Mammary epithelial cell (primary cell): ENCODE measurements at regions of chr10 and their contacts with region 1.

Region 1: DNA sequence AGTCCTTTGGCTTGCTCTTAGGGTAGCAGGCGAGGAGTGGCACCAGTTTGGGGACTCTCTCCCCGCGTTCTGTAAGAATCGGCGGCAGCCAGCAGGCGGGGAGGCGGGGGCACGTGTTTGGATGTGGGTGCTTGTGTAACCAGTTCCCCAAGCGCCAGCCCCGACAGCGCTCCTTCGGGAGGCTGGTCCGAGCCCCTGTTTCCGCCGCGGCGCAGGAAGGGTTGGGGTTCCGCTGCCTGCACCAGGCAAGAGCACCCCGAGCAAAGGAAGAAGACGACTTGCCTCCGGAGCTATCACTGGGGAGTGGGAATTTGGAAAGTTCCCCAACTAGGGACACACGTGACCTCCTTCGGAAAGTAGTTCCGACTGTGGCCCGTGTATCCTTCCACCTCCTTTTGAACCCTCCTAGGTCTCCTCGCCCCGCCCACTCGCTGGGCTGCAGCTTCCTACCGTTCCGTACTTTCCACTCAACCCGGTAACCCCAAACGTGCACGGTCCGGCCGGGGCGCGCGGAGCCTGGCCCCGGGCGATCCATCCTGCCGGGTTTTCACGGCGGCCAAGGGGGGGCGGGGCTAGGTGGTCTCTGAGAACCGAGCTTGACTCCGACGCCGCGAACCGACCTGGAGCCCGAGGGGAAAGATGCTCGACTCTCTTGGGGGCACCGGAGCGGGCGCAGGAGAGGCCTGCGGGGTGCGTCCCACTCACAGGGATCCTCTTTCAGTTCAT is 1.2 kb downstream of the KLLN start:
- DNase-seq: peak; percentile 96
- H3K4me3 ChIP-seq: peak overlapping the region; percentile 51 to 77 (median 68)
- H3K27ac ChIP-seq: peak overlapping the region; percentile 69
- H3K4me1 ChIP-seq: peaks cover 12% of the 10 kb centered on the region
- H3K27me3 ChIP-seq: no peaks in the 10 kb centered on the region
- CTCF ChIP-seq: no peak

Region 2: DNA sequence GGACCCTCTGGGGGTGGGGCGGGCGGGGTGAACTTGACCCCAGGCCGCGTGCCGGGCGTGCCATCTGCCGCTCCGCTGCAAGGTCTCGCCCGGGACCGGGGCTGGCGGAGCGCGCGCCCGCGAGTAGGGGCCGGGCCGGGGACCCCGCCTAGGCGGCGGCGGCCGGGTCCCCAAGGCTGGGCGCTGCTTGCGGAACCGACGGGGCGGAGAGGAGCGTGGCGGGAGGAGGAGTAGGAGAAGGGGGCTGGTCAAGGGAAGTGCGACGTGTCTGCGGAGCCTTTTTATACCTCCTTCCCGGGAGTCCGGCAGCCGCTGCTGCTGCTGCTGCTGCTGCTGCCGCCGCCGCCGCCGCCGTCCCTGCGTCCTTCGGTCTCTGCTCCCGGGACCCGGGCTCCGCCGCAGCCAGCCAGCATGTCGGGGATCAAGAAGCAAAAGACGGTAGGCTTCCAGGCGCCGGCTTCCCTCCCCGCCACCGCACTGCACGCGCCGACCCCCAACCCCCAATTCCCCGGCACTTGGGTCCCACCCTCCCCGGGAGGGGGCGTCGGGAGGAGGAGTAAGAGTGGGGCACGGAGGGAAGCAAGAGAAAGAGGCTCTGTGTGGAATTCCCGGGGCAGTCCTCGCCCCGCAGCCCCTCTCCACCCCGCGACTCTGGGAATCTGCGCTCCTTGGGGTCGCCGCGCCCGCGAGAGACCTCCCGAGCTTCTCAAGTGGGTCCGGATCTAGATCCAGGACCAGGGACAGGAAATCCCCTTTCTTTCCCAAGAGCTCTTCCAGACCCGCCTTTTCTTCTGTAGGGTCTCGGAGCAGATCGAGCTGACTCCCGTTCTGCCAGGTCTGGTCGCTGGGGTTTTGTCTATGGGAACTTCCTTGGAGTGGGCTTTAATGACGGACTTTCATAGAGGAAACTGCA is 202.3 kb before region 1 on chr10 and contains the start of gene PAPSS2:
- CTCF ChIA-PET with region 1: no interaction called
- dilution Hi-C with region 1: no loop called
- in situ Hi-C with region 1: no loop called
- intact Hi-C with region 1: loop called (anchors 5 kb)
- DNase-seq: peak; percentile 46
- H3K4me3 ChIP-seq: peak within 1 kb of the TSS; percentile 35 to 79 (median 68)
- H3K27ac ChIP-seq: no peak within 1 kb of the TSS
- H3K4me1 ChIP-seq: peaks cover 3% of the 10 kb centered on the region
- H3K27me3 ChIP-seq: no peaks in the 10 kb centered on the region
- CTCF ChIP-seq: no peak
- total RNA-seq, gene PAPSS2: 3.8 to 9.1 TPM

Region 3: GRCh38 chr10:87931836-87932230 is 69.7 kb after region 1 on chr10:
- CTCF ChIA-PET with region 1: no interaction called
- dilution Hi-C with region 1: no loop called
- in situ Hi-C with region 1: no loop called
- intact Hi-C with region 1: loop called (anchors 5 kb)
- DNase-seq: peak; percentile 66
- H3K4me3 ChIP-seq: no peak overlapping the region
- H3K27ac ChIP-seq: peak overlapping the region; percentile 45
- H3K4me1 ChIP-seq: peaks cover 28% of the 10 kb centered on the region
- H3K27me3 ChIP-seq: no peaks in the 10 kb centered on the region
- CTCF ChIP-seq: no peak

Region 4: GRCh38 chr10:87945984-87946383 is 83.9 kb after region 1 on chr10:
- CTCF ChIA-PET with region 1: no interaction called
- dilution Hi-C with region 1: no loop called
- in situ Hi-C with region 1: no loop called
- intact Hi-C with region 1: no loop called
- DNase-seq: no peak
- H3K4me3 ChIP-seq: no peak overlapping the region
- H3K27ac ChIP-seq: no peak overlapping the region
- H3K4me1 ChIP-seq: no peaks in the 10 kb centered on the region
- H3K27me3 ChIP-seq: no peaks in the 10 kb centered on the region
- CTCF ChIP-seq: no peak

Region 5: GRCh38 chr10:88114368-88114767 is 252.3 kb after region 1 on chr10:
- CTCF ChIA-PET with region 1: no interaction called
- dilution Hi-C with region 1: no loop called
- in situ Hi-C with region 1: no loop called
- intact Hi-C with region 1: loop called (anchors 2 kb)
- DNase-seq: no peak
- H3K4me3 ChIP-seq: no peak overlapping the region
- H3K27ac ChIP-seq: no peak overlapping the region
- H3K4me1 ChIP-seq: peaks cover 28% of the 10 kb centered on the region
- H3K27me3 ChIP-seq: no peaks in the 10 kb centered on the region
- CTCF ChIP-seq: peak; percentile 38 to 52

Region 6: DNA sequence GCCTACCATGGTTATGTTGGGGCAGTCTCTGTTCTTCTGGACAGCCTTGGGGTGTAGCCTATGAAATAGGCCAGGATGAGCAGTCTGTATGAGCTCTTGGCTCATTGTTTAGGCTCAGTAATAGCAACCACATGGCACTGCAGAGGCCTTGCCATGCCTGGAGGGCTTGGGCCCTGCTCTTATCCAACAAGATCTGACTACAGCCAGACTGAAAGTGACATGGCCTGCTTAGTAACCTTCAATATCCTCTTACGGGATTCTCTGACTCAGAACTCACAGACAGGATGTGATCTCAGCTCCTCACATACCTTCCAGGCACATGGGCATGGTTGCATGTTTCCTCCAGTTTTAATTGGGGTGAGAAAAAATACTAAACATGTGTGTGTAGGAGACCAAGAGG is 290.6 kb after region 1 on chr10:
- CTCF ChIA-PET with region 1: no interaction called
- dilution Hi-C with region 1: no loop called
- in situ Hi-C with region 1: no loop called
- intact Hi-C with region 1: loop called (anchors 2 kb)
- DNase-seq: peak; percentile 96
- H3K4me3 ChIP-seq: no peak overlapping the region
- H3K27ac ChIP-seq: peak overlapping the region; percentile 75
- H3K4me1 ChIP-seq: peaks cover 57% of the 10 kb centered on the region
- H3K27me3 ChIP-seq: no peaks in the 10 kb centered on the region
- CTCF ChIP-seq: no peak

Region 7: GRCh38 chr10:88386821-88387773 is 525.0 kb after region 1 on chr10:
- CTCF ChIA-PET with region 1: interaction called, 32 read pairs
- dilution Hi-C with region 1: no loop called
- in situ Hi-C with region 1: loop called (anchors 5 kb)
- intact Hi-C with region 1: loop called (anchors 1 kb)
- DNase-seq: peak; percentile 42
- H3K4me3 ChIP-seq: no peak overlapping the region
- H3K27ac ChIP-seq: no peak overlapping the region
- H3K4me1 ChIP-seq: peaks cover 26% of the 10 kb centered on the region
- H3K27me3 ChIP-seq: no peaks in the 10 kb centered on the region
- CTCF ChIP-seq: no peak

Region 8: GRCh38 chr10:88553116-88553752 is 691.1 kb after region 1 on chr10:
- CTCF ChIA-PET with region 1: no interaction called
- dilution Hi-C with region 1: no loop called
- in situ Hi-C with region 1: loop called (anchors 10 kb)
- intact Hi-C with region 1: loop called (anchors 1 kb)
- DNase-seq: peak; percentile 66
- H3K4me3 ChIP-seq: no peak overlapping the region
- H3K27ac ChIP-seq: no peak overlapping the region
- H3K4me1 ChIP-seq: no peaks in the 10 kb centered on the region
- H3K27me3 ChIP-seq: no peaks in the 10 kb centered on the region
- CTCF ChIP-seq: peak; percentile 88 to 89